Panc1 (cell line): ENCODE measurements at regions of chr4 and their contacts with region 1.

Region 1: DNA sequence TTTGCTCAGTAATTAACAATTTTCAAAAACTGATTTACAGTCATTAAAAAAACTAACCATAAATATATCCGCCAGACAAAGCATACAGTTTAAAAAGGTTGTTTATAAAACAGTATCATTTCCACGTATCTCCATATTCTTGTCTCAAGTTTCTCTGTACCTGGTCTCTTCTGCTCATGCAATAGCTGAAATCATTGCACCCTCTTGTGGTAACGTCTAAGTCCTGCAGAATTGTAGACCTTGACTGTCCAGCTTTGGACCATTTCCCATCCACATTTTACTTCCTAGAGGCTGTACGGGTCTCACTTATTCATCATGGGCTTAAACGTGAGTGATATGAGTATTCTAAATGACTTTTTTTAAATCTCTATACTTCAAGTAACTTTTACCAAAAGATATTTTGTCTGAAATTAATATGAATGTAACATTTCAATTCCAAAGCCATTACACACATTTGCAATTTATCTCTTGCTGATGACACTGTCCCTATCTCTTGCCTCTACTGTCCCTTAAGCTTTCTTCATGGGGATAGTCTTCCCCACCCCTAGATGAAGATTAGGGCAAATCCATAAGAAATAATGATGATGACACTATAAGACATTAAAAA is 118.5 kb downstream of the BTC start:
- DNase-seq: no peak
- ATAC-seq: peak; percentile 80; the same call in 1 of the 2 replicates
- H3K4me3 ChIP-seq: no peak overlapping the region
- H3K27ac ChIP-seq: no peak overlapping the region
- H3K4me1 ChIP-seq: no peaks in the 10 kb centered on the region
- H3K27me3 ChIP-seq: no peaks in the 10 kb centered on the region
- CTCF ChIP-seq: peak; percentile 71; the same call in 1 of the 2 replicates

Region 2: GRCh38 chr4:74228691-74229640 is 446.8 kb before region 1 on chr4:
- CTCF ChIA-PET with region 1: no interaction called
- POLR2A ChIA-PET with region 1: no interaction called
- in situ Hi-C with region 1: no loop called
- intact Hi-C with region 1: loop called (anchors 10 kb)
- DNase-seq: peak; percentile 18
- ATAC-seq: peak; percentile 80
- H3K4me3 ChIP-seq: no peak overlapping the region
- H3K27ac ChIP-seq: no peak overlapping the region
- H3K4me1 ChIP-seq: no peaks in the 10 kb centered on the region
- H3K27me3 ChIP-seq: no peaks in the 10 kb centered on the region
- CTCF ChIP-seq: peak; percentile 85

Region 3: DNA sequence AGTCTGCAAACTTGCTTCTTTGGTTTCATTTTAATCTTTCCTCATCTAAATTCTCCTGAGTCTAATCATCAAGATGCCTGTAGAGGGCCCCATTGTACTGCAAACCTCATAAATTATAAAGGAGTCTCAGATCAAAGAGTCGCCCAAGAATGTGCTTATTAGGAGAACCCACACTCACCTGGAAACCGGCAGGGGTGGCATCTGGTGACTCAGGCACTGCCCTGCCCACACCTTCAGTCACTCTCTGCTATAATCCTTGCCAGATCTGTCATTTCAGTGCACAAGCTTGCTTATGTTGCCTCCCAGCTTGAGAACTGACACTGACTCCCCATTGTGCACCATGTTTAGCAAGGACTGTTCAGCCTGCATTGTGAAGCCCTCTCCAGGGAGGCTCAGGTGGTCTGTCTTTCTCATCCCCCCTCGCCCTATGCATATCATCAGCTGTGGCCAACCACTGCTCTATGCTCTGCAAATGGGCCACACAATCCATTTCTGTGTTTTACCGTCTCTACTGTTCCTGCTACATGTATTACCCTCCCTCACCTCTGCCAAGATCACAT is 355.1 kb before region 1 on chr4:
- CTCF ChIA-PET with region 1: interaction called, 3 read pairs
- POLR2A ChIA-PET with region 1: no interaction called
- in situ Hi-C with region 1: no loop called
- intact Hi-C with region 1: loop called (anchors 5 kb)
- DNase-seq: peak; percentile 56
- ATAC-seq: peak; percentile 85
- H3K4me3 ChIP-seq: no peak overlapping the region
- H3K27ac ChIP-seq: no peak overlapping the region
- H3K4me1 ChIP-seq: no peaks in the 10 kb centered on the region
- H3K27me3 ChIP-seq: no peaks in the 10 kb centered on the region
- CTCF ChIP-seq: peak; percentile 66

Region 4: GRCh38 chr4:74376888-74377483 is 298.8 kb before region 1 on chr4:
- CTCF ChIA-PET with region 1: no interaction called
- POLR2A ChIA-PET with region 1: no interaction called
- in situ Hi-C with region 1: no loop called
- intact Hi-C with region 1: loop called (anchors 2 kb)
- DNase-seq: no peak
- ATAC-seq: no peak
- H3K4me3 ChIP-seq: no peak overlapping the region
- H3K27ac ChIP-seq: no peak overlapping the region
- H3K4me1 ChIP-seq: no peaks in the 10 kb centered on the region; the same call in 1 of the 2 replicates
- H3K27me3 ChIP-seq: no peaks in the 10 kb centered on the region
- CTCF ChIP-seq: peak; percentile 66; the same call in 1 of the 2 replicates

Region 5: DNA sequence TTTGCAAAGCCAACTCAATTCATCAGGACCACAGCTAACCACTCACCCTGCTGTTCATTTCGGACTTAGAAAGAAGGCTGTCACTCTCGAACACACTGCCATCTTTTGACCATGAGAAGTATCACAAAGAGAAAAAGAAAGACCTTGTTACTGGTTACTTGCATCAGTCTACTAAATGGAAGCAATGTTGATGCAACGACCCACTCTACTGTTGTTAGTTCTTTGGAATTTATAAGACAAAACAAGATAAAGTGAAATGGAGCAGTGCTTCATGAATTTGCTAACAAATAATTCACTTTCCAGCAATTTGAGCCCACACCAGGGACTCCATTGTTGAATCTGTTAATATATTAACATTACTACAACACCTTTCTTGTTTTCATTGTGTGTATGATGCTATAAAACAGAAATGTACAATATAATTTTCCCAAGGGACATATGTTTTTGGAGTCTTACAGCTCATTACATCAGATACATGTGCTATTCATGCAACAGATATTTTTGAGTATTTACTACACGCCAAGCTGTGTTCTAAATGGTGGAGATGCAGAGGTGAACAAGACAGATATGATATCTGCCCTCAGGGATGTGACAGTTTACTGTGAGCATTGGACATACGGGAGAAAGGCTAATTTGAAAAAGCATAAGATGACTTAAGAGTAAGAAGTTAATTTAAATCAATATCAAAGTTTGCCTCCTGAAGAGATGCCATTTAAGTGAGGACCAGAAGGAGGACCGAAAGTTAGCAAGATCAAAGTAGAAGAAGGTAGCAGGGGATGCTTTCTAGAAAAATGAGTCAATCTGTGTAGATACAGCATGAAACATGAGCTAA is 143.6 kb before region 1 on chr4:
- CTCF ChIA-PET with region 1: no interaction called
- POLR2A ChIA-PET with region 1: no interaction called
- in situ Hi-C with region 1: no loop called
- intact Hi-C with region 1: loop called (anchors 10 kb)
- DNase-seq: peak; percentile 75
- ATAC-seq: 0 out of 2 replicates have a peak, but pooled peaks have one; percentile 63
- H3K4me3 ChIP-seq: no peak overlapping the region
- H3K27ac ChIP-seq: peak overlapping the region; percentile 56; the same call in 1 of the 2 replicates
- H3K4me1 ChIP-seq: no peaks in the 10 kb centered on the region
- H3K27me3 ChIP-seq: no peaks in the 10 kb centered on the region
- CTCF ChIP-seq: peak; percentile 55

Region 6: GRCh38 chr4:74897386-74897785 is 221.6 kb after region 1 on chr4:
- CTCF ChIA-PET with region 1: no interaction called
- POLR2A ChIA-PET with region 1: no interaction called
- in situ Hi-C with region 1: no loop called
- intact Hi-C with region 1: no loop called
- DNase-seq: no peak
- ATAC-seq: no peak
- H3K4me3 ChIP-seq: no peak overlapping the region
- H3K27ac ChIP-seq: no peak overlapping the region
- H3K4me1 ChIP-seq: no peaks in the 10 kb centered on the region
- H3K27me3 ChIP-seq: no peaks in the 10 kb centered on the region
- CTCF ChIP-seq: no peak